Upper lobe of right lung (tissue), 1 donor: ENCODE measurements at regions of chr13 and their contacts with region 1.

Region 1: GRCh38 chr13:34522808-34523207 is 419.3 kb upstream of the NBEA start:
- DNase-seq: no peak
- ATAC-seq: no peak
- H3K4me3 ChIP-seq: no peak overlapping the region
- H3K27ac ChIP-seq: no peak overlapping the region
- H3K4me1 ChIP-seq: no peaks in the 10 kb centered on the region
- H3K27me3 ChIP-seq: no peaks in the 10 kb centered on the region
- CTCF ChIP-seq: no peak

Region 2: DNA sequence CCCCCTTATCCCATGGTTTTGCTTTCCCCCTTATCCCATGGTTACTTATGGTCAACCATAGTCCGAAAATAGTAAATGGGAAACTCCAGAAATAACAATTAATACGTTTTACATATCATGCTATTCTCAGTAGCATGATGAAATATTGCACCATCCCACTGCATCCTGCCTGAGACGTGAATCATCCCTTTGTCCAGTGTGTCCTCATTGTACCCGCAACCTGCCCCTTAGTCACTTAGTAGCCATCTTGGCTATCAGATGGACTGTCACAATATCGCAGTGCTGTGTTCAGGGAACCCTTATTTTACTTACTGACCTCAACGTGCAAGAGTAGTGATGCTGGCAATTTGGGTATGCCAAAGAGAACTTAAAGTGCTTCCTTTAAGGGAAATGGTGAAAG is 408.8 kb after region 1 on chr13:
- intact Hi-C with region 1: loop called (anchors 5 kb)
- DNase-seq: no peak
- ATAC-seq: no peak
- H3K4me3 ChIP-seq: no peak overlapping the region
- H3K27ac ChIP-seq: no peak overlapping the region
- H3K4me1 ChIP-seq: no peaks in the 10 kb centered on the region
- H3K27me3 ChIP-seq: no peaks in the 10 kb centered on the region
- CTCF ChIP-seq: no peak